ENCODE measurements at regions of chr1 and their contacts with region 1.

Region 1: DNA sequence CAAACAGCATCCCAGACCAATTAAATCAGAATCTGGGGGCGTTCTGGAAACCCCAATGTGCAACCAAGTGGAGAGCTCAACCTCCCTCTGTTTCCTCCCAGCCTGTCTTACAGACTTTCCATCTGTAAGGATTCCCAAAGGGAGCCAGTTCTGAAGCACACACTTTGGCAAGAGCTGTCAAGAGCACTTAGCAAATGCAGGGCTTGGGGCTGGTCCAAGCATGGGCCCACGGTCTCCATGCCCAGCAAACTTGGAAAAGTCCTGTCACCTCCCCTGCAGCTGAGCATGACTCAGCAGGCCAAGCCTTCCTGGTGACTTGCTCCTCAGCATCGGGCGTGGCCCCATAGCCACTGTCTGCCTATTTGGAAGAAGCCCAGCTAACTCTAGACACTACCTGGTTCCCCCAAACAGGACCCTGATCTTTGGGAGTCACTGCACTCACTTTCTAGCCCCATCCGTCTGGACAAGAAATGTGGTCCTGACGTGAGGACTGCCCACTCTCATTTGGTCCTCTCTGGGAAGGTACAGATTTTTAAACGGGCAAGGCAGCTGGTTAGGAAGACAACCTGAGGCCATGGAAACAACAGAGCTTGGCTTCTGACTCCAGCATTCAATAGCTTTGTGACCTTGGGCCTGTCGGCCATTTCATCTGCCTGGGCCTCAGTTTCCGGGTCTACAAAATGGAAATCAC is 16.9 kb downstream of the SLC2A1 start:
- DNase-seq: peak; percentile 55
- ATAC-seq: peak; percentile 14
- H3K4me3 Mint-ChIP-seq: no peak overlapping the region
- H3K27ac Mint-ChIP-seq: peak overlapping the region; percentile 79
- H3K4me1 Mint-ChIP-seq: peaks cover 95% of the 10 kb centered on the region
- H3K27me3 Mint-ChIP-seq: no peaks in the 10 kb centered on the region

Region 2: DNA sequence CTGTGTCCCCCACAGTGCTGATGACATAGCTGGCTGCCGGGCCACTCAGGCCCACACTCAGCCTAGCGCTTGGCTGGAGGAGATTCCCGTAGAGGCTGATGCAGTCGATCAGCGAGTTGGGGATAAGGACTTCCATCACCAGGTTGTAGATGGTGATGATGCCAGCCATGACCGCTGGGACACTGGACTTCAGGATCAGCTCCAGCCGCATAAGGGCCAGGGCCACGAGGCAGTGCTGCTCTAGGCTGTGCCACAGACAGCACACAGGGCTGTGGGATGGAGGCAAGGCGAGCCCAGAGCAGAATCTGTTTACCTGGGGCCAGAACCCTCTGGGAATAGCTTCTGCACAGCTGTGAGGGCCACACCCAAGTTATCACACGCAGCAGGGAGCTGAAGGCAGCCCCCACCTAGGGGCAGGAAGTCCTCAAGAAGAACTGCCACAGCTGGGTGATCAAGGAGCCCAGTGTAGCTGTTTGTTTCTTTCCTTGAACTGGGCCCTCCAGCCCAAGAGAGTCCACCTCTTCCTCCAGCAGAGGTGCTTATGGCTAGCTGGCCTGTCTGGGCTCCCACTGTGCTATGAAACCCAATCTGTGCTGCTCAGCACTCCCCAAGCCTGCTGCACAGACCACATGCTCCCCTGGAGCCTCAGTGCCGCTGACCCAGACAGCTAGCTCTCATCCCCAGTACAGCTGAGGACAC is 10.7 kb after region 1 on chr1:
- CTCF ChIA-PET with region 1: interaction called, 5 read pairs
- POLR2A ChIA-PET with region 1: interaction called, 20 read pairs
- intact Hi-C with region 1: no loop called
- DNase-seq: no peak
- ATAC-seq: no peak
- H3K4me3 Mint-ChIP-seq: no peak overlapping the region
- H3K27ac Mint-ChIP-seq: no peak overlapping the region
- H3K4me1 Mint-ChIP-seq: peaks cover 88% of the 10 kb centered on the region
- H3K27me3 Mint-ChIP-seq: no peaks in the 10 kb centered on the region

Region 3: GRCh38 chr1:43008115-43009060 is 66.6 kb after region 1 on chr1:
- CTCF ChIA-PET with region 1: no interaction called
- POLR2A ChIA-PET with region 1: no interaction called
- intact Hi-C with region 1: no loop called
- DNase-seq: no peak
- ATAC-seq: no peak
- H3K4me3 Mint-ChIP-seq: no peak overlapping the region
- H3K27ac Mint-ChIP-seq: no peak overlapping the region
- H3K4me1 Mint-ChIP-seq: no peaks in the 10 kb centered on the region
- H3K27me3 Mint-ChIP-seq: peaks cover 4% of the 10 kb centered on the region

Measured in activated CD4-positive, alpha-beta T cell treated with anti-CD3 and anti-CD28 coated beads for 36 hours (primary cell).